ENCODE measurements at regions of chr1 and their contacts with region 1.

Region 1: DNA sequence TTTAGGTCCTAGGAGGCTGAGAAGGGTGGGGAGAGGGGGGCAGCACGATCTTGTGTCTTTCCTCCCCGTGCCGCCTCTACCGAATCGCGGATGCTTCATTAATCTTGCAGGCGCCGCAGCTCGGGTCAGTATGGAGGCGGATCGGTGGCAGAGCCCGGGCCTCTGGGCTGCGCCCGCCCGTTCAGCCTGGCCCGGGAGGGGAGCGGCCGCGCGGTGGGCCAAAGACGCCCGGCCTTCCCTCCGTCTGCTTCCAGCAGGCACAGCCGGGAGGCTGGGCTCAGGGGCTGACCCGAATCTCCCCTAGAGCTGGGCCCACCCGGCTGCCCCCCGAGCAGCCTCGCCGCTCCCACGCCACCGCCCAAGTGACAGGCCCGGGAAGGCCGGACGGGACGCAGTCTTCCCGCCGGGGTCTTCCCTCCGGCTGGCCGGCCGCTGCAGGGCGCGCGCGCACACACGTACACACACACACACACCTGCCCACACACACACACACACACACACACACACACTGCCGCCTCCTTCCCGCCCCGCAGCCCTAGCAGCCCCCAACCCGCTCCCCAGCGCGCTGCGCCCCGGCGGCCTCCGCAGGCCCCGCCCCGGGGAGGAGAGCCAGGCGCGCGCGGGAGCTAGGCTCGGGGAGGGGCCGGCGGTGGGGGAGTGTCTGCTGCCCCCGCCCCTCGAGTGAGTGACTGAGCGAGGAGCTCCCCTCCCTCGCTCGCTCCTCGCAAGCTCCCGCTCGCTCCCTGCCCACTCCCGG is at the start of gene C1orf21:
- DNase-seq: peak; percentile 51 to 88
- H3K4me3 ChIP-seq: peak within 1 kb of the TSS; percentile 84
- H3K27ac ChIP-seq: no peak within 1 kb of the TSS
- H3K4me1 ChIP-seq: peaks cover 12% of the 10 kb centered on the region; the same call in 1 of the 2 replicates
- H3K27me3 ChIP-seq: peaks cover 4% of the 10 kb centered on the region; the same call in 1 of the 2 replicates
- CTCF ChIP-seq: no peak
- total RNA-seq, gene C1orf21: 13.6 and 13.8 TPM in 2 replicates

Region 2: DNA sequence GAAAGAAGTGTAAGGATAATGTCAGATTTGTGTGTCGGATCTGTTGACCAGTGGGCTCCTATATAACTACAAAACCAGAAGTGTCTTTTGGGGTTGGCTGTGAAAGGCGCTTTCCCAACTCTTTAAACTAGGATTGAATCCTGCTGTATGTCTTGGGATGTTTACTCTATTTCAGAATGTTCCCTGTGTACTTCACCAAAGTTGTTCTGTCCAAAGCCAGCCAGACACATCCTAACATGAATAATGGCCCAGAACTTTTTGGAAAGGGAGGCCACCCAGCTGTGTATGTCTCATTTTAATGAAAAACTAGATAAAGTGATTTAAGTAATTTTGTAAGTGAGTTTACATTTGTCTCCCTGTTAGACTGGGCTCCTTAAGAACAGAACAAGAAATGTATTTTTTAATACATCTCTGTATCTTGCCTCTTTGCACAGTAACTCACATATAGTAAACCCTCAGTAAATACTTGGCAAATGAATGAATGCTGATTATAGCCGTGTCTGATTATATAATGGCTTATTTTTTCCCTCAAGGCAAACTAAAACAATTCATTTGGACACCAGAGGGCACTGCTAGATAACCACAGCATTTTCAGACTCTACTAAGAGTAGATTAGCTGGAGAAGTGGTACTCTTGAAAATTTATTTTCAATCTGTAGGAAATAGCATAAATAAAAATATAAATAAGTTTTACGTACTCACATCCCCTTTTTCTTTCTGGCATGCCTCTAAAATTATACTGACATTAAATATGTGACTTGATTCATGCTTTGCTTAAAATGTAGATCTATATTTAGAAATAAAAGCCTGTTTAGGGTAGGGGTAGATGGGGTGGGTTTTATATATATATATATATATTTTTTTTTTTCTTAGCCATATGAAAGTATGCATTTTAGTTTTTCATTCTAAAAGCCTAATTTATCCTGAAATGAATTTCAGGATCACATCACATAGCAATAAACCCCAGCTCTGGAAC is 311.1 kb before region 1 on chr1:
- CTCF ChIA-PET with region 1: no interaction called
- POLR2A ChIA-PET with region 1: no interaction called
- intact Hi-C with region 1: loop called (anchors 10 kb)
- DNase-seq: peak; percentile 15 to 43
- H3K4me3 ChIP-seq: no peak overlapping the region
- H3K27ac ChIP-seq: no peak overlapping the region
- H3K4me1 ChIP-seq: no peaks in the 10 kb centered on the region
- H3K27me3 ChIP-seq: no peaks in the 10 kb centered on the region
- CTCF ChIP-seq: peak; percentile 85

Region 3: GRCh38 chr1:184289825-184290550 is 96.5 kb before region 1 on chr1:
- CTCF ChIA-PET with region 1: no interaction called
- POLR2A ChIA-PET with region 1: no interaction called
- intact Hi-C with region 1: no loop called
- DNase-seq: no peak
- H3K4me3 ChIP-seq: no peak overlapping the region
- H3K27ac ChIP-seq: no peak overlapping the region
- H3K4me1 ChIP-seq: no peaks in the 10 kb centered on the region
- H3K27me3 ChIP-seq: no peaks in the 10 kb centered on the region
- CTCF ChIP-seq: no peak

Region 4: GRCh38 chr1:184407816-184408537 is 21.5 kb after region 1 on chr1:
- CTCF ChIA-PET with region 1: no interaction called
- POLR2A ChIA-PET with region 1: interaction called, 10 read pairs
- intact Hi-C with region 1: no loop called
- DNase-seq: no peak
- H3K4me3 ChIP-seq: no peak overlapping the region
- H3K27ac ChIP-seq: no peak overlapping the region
- H3K4me1 ChIP-seq: no peaks in the 10 kb centered on the region
- H3K27me3 ChIP-seq: no peaks in the 10 kb centered on the region
- CTCF ChIP-seq: no peak

Region 5: GRCh38 chr1:184563308-184563707 is 176.8 kb after region 1 on chr1:
- CTCF ChIA-PET with region 1: no interaction called
- POLR2A ChIA-PET with region 1: interaction called, 5 read pairs
- intact Hi-C with region 1: loop called (anchors 2 kb)
- DNase-seq: no peak
- H3K4me3 ChIP-seq: no peak overlapping the region
- H3K27ac ChIP-seq: no peak overlapping the region
- H3K4me1 ChIP-seq: no peaks in the 10 kb centered on the region
- H3K27me3 ChIP-seq: no peaks in the 10 kb centered on the region
- CTCF ChIP-seq: peak; percentile 60

Region 6: GRCh38 chr1:184664042-184664655 is 277.7 kb after region 1 on chr1:
- CTCF ChIA-PET with region 1: interaction called, 9 read pairs
- POLR2A ChIA-PET with region 1: no interaction called
- intact Hi-C with region 1: loop called (anchors 5 kb)
- DNase-seq: peak in 1 of 2 experiments; percentile 49
- H3K4me3 ChIP-seq: no peak overlapping the region
- H3K27ac ChIP-seq: no peak overlapping the region
- H3K4me1 ChIP-seq: no peaks in the 10 kb centered on the region
- H3K27me3 ChIP-seq: no peaks in the 10 kb centered on the region
- CTCF ChIP-seq: peak; percentile 80

Region 7: GRCh38 chr1:184771190-184771691 is 384.8 kb after region 1 on chr1:
- CTCF ChIA-PET with region 1: no interaction called
- POLR2A ChIA-PET with region 1: no interaction called
- intact Hi-C with region 1: no loop called
- DNase-seq: no peak
- H3K4me3 ChIP-seq: no peak overlapping the region
- H3K27ac ChIP-seq: no peak overlapping the region
- H3K4me1 ChIP-seq: no peaks in the 10 kb centered on the region
- H3K27me3 ChIP-seq: no peaks in the 10 kb centered on the region
- CTCF ChIP-seq: no peak

Measured in PC-9 (cell line).